Mammary epithelial cell (primary cell): ENCODE measurements at regions of chr5 and their contacts with region 1.

Region 1: DNA sequence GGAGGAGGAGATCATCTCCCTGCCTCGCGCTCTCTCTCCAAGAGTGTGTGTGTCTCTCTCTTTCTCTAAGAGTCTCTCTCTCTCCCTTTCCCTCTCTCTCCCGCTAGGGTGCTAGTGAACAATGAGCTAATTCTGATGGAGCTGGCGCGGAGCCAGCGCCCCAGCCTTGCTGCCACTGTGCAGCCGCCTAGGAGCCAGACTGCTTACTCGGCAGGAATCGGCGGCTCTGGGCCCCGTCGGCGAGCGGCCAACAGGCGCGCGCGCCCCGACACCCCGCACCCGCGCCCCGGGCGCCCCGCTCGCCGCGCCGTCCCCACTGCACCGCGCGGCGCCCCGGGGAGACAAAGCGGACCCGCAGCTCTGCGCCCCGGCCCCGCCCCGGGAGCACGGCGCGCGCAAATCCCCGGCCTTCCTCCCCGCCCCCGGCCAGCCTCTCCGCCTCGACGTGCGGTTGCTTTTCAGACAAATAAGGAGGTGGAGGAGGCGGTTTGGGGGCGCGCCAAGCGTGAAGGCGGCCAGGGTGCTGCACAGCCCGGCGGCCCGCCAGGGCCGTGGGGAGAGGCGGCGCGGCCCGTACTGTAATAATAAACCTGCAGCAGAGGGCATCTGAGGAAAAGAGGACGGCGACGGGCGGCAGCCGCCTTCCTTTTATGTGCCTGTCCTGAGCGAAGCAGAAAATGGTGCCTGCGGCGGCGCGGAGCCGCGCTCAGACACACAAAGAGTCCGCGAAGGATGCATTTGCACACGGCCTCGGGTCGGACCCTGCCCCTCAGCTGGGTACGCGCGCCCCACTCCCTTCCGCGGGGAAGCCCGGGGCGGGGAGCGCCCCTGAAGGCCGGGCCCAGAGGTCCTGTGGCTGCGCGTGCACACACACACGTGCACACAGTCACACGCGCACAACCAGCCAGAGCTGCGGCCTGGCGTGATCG is 625 bp upstream of the NREP start:
- DNase-seq: peak; percentile 93
- H3K4me3 ChIP-seq: peak overlapping the region; percentile 35 to 58 (median 39)
- H3K27ac ChIP-seq: peak overlapping the region; percentile 28
- H3K4me1 ChIP-seq: peaks cover 5% of the 10 kb centered on the region
- H3K27me3 ChIP-seq: no peaks in the 10 kb centered on the region
- CTCF ChIP-seq: peak; percentile 48 to 70

Region 2: GRCh38 chr5:111618623-111619271 is 138.9 kb before region 1 on chr5:
- CTCF ChIA-PET with region 1: no interaction called
- dilution Hi-C with region 1: no loop called
- in situ Hi-C with region 1: no loop called
- intact Hi-C with region 1: loop called (anchors 5 kb)
- DNase-seq: peak; percentile 72
- H3K4me3 ChIP-seq: no peak overlapping the region
- H3K27ac ChIP-seq: no peak overlapping the region
- H3K4me1 ChIP-seq: no peaks in the 10 kb centered on the region
- H3K27me3 ChIP-seq: no peaks in the 10 kb centered on the region
- CTCF ChIP-seq: no peak

Region 3: GRCh38 chr5:111680737-111681413 is 76.7 kb before region 1 on chr5:
- CTCF ChIA-PET with region 1: interaction called, 3 read pairs
- dilution Hi-C with region 1: no loop called
- in situ Hi-C with region 1: no loop called
- intact Hi-C with region 1: loop called (anchors 2 kb)
- DNase-seq: peak; percentile 96
- H3K4me3 ChIP-seq: no peak overlapping the region
- H3K27ac ChIP-seq: peak overlapping the region; percentile 67
- H3K4me1 ChIP-seq: peaks cover 28% of the 10 kb centered on the region
- H3K27me3 ChIP-seq: no peaks in the 10 kb centered on the region
- CTCF ChIP-seq: no peak

Region 4: GRCh38 chr5:111697881-111698757 is 59.5 kb before region 1 on chr5:
- CTCF ChIA-PET with region 1: no interaction called
- dilution Hi-C with region 1: no loop called
- in situ Hi-C with region 1: no loop called
- intact Hi-C with region 1: loop called (anchors 5 kb)
- DNase-seq: no peak
- H3K4me3 ChIP-seq: no peak overlapping the region
- H3K27ac ChIP-seq: no peak overlapping the region
- H3K4me1 ChIP-seq: peaks cover 34% of the 10 kb centered on the region
- H3K27me3 ChIP-seq: no peaks in the 10 kb centered on the region
- CTCF ChIP-seq: peak in 1 of 2 donors; percentile 4

Region 5: GRCh38 chr5:111792471-111793058 is 34.9 kb after region 1 on chr5:
- CTCF ChIA-PET with region 1: no interaction called
- dilution Hi-C with region 1: no loop called
- in situ Hi-C with region 1: no loop called
- intact Hi-C with region 1: no loop called
- DNase-seq: no peak
- H3K4me3 ChIP-seq: no peak overlapping the region
- H3K27ac ChIP-seq: no peak overlapping the region
- H3K4me1 ChIP-seq: no peaks in the 10 kb centered on the region
- H3K27me3 ChIP-seq: peaks cover 2% of the 10 kb centered on the region
- CTCF ChIP-seq: no peak

Region 6: GRCh38 chr5:111830333-111830732 is 72.7 kb after region 1 on chr5:
- CTCF ChIA-PET with region 1: interaction called, 3 read pairs
- dilution Hi-C with region 1: no loop called
- in situ Hi-C with region 1: no loop called
- intact Hi-C with region 1: loop called (anchors 5 kb)
- DNase-seq: peak; percentile 94
- H3K4me3 ChIP-seq: no peak overlapping the region
- H3K27ac ChIP-seq: peak overlapping the region; percentile 18
- H3K4me1 ChIP-seq: peaks cover 7% of the 10 kb centered on the region
- H3K27me3 ChIP-seq: peaks cover 13% of the 10 kb centered on the region
- CTCF ChIP-seq: no peak

Region 7: GRCh38 chr5:112663146-112663545 is 905.5 kb after region 1 on chr5:
- CTCF ChIA-PET with region 1: no interaction called
- dilution Hi-C with region 1: no loop called
- in situ Hi-C with region 1: no loop called
- intact Hi-C with region 1: no loop called
- DNase-seq: no peak
- H3K4me3 ChIP-seq: no peak overlapping the region
- H3K27ac ChIP-seq: no peak overlapping the region
- H3K4me1 ChIP-seq: no peaks in the 10 kb centered on the region
- H3K27me3 ChIP-seq: no peaks in the 10 kb centered on the region
- CTCF ChIP-seq: no peak